ENCODE measurements at regions of chr17 and their contacts with region 1.

Region 1: DNA sequence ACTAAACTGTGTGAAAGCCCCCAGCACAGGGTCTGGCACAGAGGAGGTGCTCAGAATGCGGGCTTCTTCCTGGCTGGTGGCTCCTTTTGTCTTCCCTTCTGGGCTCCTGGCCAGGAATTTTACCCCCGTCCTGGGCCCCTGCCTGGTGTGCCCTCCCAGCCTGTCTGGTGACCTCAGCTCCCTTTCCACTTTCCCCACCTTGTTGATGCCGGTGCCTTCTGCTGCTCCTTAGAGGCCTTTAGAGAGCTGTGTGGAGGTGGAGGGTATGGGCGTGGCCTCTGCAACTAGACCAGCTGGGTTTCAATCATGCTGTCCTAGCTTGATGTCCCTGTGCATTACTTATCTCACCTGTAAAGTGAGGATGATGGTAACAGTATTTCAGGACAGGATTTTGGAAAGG is 16.8 kb downstream of the PIRT start:
- DNase-seq: no peak
- ATAC-seq: no peak
- H3K4me3 ChIP-seq: no peak overlapping the region
- H3K27ac ChIP-seq: no peak overlapping the region
- H3K4me1 ChIP-seq: no peaks in the 10 kb centered on the region
- H3K27me3 ChIP-seq: peaks cover 0 to 3% (median 0%) of the 10 kb centered on the region in 7 donors
- CTCF ChIP-seq: no peak

Region 2: DNA sequence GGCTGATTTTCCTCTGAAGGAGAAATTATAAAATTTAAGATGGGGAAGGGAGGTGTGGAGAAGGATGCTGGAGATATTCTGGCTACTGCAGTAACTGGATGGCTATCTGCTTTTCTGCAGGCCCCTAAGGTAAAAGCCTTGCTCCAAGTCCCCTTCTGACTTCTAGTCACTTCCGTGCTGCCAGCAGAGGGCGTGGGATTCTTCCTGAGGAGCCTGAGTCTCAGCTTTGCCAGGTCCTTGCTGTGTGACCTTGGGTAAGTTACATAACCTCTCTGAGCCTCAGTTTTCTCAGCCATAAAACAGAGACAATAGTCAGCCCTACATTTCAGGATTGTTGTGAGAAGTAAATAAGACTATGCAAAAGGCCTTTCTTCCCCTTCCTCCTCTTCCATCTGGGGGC is 67.0 kb before region 1 on chr17:
- intact Hi-C with region 1: loop called in 1 of 10 experiments (anchors 5 kb)
- DNase-seq: peak in 1 of 2 donors; percentile 32
- ATAC-seq: no peak
- H3K4me3 ChIP-seq: no peak overlapping the region
- H3K27ac ChIP-seq: no peak overlapping the region
- H3K4me1 ChIP-seq: peaks cover 0 to 5% (median 0%) of the 10 kb centered on the region in 9 donors
- H3K27me3 ChIP-seq: peaks cover 0 to 17% (median 0%) of the 10 kb centered on the region in 7 donors
- CTCF ChIP-seq: peak in 6 of 9 donors; percentile 18 to 41 (median 28)

Measured in heart right ventricle (tissue), 16 donors.